ENCODE measurements at regions of chr21 and their contacts with region 1.

Region 1: DNA sequence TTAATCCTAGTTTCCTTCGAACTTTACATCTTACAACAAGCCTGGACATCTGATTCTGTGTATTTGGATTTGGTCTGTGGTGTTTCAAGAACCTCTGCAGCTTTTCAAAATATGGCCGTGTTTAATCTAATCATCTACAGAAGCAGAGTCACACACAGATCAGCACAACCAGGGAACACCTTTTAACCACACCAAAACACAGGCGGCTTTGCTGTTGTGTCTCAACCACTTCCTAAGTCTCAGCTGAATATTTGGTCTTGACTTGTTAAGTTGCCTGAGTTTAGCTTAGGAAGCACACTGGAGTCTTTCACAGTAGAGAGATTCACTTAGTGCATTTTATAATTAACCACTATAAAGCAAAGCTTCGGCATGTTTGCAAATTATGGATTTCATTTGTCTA is 17.1 kb downstream of the ADAMTS5 start:
- DNase-seq: no peak
- ATAC-seq: no peak
- H3K4me3 ChIP-seq: no peak overlapping the region
- H3K27ac ChIP-seq: no peak overlapping the region
- H3K4me1 ChIP-seq: peaks cover 8% of the 10 kb centered on the region
- H3K27me3 ChIP-seq: no peaks in the 10 kb centered on the region
- CTCF ChIP-seq: no peak

Region 2: DNA sequence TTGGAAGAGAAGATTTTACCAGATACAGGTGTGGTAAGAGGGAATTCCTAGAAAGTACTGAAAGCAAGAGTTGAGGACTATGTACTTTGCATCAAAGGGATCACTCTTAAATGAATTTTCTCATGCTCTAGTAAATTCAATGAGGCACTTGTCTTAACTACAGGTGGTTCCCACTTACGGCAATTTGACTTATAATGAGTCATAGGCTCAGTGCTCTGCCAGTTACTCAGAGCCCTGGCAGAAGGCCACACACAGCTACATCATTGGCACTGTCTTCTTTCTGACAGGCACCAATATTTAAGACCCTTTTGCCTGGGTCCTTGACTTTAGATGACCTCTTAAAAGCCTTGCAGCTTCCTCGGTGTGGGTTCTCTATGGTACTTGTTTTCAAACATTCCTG is 32.9 kb after region 1 on chr21:
- intact Hi-C with region 1: loop called in 1 of 2 experiments (anchors 2 kb)
- DNase-seq: no peak
- ATAC-seq: no peak
- H3K4me3 ChIP-seq: no peak overlapping the region
- H3K27ac ChIP-seq: no peak overlapping the region
- H3K4me1 ChIP-seq: no peaks in the 10 kb centered on the region
- H3K27me3 ChIP-seq: no peaks in the 10 kb centered on the region
- CTCF ChIP-seq: no peak

Region 3: DNA sequence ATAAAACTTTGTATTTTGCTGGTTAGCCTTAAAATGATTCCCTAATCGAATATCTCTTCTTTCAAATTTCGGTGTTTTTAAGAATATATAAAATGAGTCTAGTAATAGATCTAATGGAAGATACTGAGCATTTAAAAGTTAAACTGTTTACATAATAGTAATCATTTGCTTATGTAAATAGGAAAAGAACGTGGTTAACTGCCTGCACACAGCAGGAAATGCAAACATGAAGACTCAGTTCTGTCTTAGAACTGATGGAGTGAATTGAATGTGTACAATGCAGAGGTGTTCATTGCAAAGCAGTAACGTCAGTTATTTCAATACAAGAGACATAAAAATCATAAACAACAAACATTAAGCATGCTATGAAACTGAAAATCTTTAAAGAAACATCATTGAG is 376.4 kb after region 1 on chr21:
- intact Hi-C with region 1: no loop called
- DNase-seq: no peak
- ATAC-seq: no peak
- H3K4me3 ChIP-seq: no peak overlapping the region
- H3K27ac ChIP-seq: no peak overlapping the region
- H3K4me1 ChIP-seq: no peaks in the 10 kb centered on the region
- H3K27me3 ChIP-seq: no peaks in the 10 kb centered on the region
- CTCF ChIP-seq: no peak